A549 (cell line): ENCODE measurements at regions of chr15 and their contacts with region 1.

Region 1: GRCh38 chr15:70806992-70807712 is 43.8 kb upstream of the UACA start:
- DNase-seq: no peak
- ATAC-seq: no peak
- H3K4me3 ChIP-seq: no peak overlapping the region
- H3K27ac ChIP-seq: peak overlapping the region in 1 of 2 experiments; percentile 41; a peak in 3 of 6 replicates
- H3K4me1 ChIP-seq: peaks cover 22% of the 10 kb centered on the region
- CTCF ChIP-seq: no peak
- EP300 ChIP-seq: no peak
- POLR2A ChIP-seq: no peak
- RAD21 ChIP-seq: no peak

Region 2: GRCh38 chr15:70679919-70680231 is 127.3 kb before region 1 on chr15:
- CTCF ChIA-PET with region 1: interaction called, 107 read pairs
- POLR2A ChIA-PET with region 1: no interaction called
- DNase-seq: no peak
- ATAC-seq: no peak
- H3K4me3 ChIP-seq: no peak overlapping the region
- H3K27ac ChIP-seq: no peak overlapping the region
- H3K4me1 ChIP-seq: no peaks in the 10 kb centered on the region
- CTCF ChIP-seq: no peak
- EP300 ChIP-seq: no peak
- POLR2A ChIP-seq: no peak
- RAD21 ChIP-seq: no peak

Region 3: DNA sequence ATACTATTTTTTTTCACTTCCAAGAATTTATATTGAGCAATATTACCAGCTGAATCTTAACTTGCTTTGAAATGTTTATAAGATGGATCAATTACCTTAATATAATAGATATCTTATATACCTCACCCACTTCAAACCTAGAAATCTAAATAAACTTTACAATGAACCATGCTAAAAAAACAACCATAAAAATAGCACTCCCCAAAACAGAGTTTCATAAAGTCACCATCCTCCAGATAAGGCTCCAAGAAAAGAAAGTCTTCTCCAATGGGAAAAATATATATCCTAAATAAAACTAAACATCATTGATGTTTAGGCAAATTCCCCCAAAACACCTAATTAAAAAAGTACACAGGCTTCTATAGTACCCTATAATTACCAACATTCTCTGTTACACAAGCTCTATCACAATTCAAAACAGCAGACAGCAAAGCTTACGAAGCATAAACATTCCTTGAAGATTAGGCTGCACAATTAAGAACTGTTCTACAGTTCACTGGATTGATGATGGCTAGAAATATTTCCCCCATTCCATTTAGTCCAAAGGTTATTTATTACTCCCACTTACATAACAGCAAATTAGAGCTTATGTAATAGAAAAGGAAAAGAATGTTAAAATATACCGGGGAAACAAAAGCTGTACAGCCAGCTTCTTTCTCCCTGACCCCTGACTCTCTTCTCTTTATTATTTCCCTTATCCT is 93.3 kb before region 1 on chr15:
- CTCF ChIA-PET with region 1: interaction called, 43 read pairs
- POLR2A ChIA-PET with region 1: no interaction called
- DNase-seq: no peak
- ATAC-seq: peak in 1 of 2 experiments; percentile 30; a peak in 2 of 6 replicates
- H3K4me3 ChIP-seq: no peak overlapping the region
- H3K27ac ChIP-seq: peak overlapping the region; percentile 34 to 52
- H3K4me1 ChIP-seq: peaks cover 50% of the 10 kb centered on the region
- CTCF ChIP-seq: no peak
- EP300 ChIP-seq: no peak
- POLR2A ChIP-seq: no peak
- RAD21 ChIP-seq: no peak

Region 4: GRCh38 chr15:70754862-70755261 is 52.3 kb before region 1 on chr15:
- CTCF ChIA-PET with region 1: interaction called, 42 read pairs
- POLR2A ChIA-PET with region 1: interaction called, 8 read pairs
- DNase-seq: no peak
- ATAC-seq: no peak
- H3K4me3 ChIP-seq: no peak overlapping the region
- H3K27ac ChIP-seq: no peak overlapping the region
- H3K4me1 ChIP-seq: peaks cover 35% of the 10 kb centered on the region
- CTCF ChIP-seq: peak; percentile 29; the same call in 2 of the 3 replicates
- EP300 ChIP-seq: no peak
- POLR2A ChIP-seq: no peak
- RAD21 ChIP-seq: peak; percentile 36 to 49; a peak in 4 of 5 replicates

Region 5: GRCh38 chr15:70826634-70827033 is 19.5 kb after region 1 on chr15:
- CTCF ChIA-PET with region 1: interaction called, 53 read pairs
- POLR2A ChIA-PET with region 1: no interaction called
- DNase-seq: peak; percentile 58 to 78
- ATAC-seq: peak; percentile 67 to 68; a peak in 5 of 6 replicates
- H3K4me3 ChIP-seq: no peak overlapping the region
- H3K27ac ChIP-seq: peak overlapping the region; percentile 69 to 85
- H3K4me1 ChIP-seq: peaks cover 41% of the 10 kb centered on the region
- CTCF ChIP-seq: no peak
- EP300 ChIP-seq: no peak
- POLR2A ChIP-seq: no peak
- RAD21 ChIP-seq: no peak

Region 6: DNA sequence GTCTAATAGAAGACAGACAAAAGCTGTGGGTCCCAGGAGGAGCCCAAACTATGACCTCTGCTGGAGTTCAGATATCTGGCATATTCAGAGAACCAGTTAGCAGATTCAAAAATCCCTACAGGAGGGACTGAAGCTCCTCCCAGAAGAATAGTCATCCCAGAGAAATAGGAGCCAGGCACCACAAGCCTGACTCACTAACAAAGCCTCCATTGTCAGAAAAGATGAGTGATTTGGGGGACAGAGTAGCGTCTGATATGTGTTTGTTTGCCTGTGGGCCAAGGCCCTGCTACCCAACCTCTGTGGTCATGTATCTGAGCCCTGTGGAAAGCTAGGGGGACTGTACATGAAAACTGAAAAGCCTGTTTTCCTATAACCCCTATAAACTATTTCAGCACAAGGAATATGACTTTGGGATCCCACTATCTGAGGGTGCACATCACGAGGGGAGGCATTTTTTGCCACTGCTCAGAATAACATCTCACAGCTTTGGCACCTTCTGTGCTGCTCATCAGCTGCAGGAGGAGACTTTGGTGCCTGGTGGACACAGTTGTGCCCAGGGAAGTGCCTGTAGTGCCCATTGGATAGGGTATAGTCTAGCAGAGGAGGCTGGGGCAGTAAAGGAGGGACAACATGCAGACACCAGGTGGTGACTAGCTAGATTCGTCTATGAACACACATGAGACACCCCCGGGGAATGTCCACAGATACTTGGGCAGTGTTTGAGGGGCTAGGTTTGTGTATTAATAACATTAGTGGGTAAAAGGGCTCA is 56.5 kb after region 1 on chr15:
- CTCF ChIA-PET with region 1: interaction called, 19 read pairs
- POLR2A ChIA-PET with region 1: no interaction called
- DNase-seq: peak; percentile 79 to 83
- ATAC-seq: peak; percentile 95
- H3K4me3 ChIP-seq: no peak overlapping the region
- H3K27ac ChIP-seq: peak overlapping the region; percentile 81 to 84
- H3K4me1 ChIP-seq: peaks cover 22% of the 10 kb centered on the region
- CTCF ChIP-seq: no peak
- EP300 ChIP-seq: no peak
- POLR2A ChIP-seq: no peak
- RAD21 ChIP-seq: no peak